ENCODE measurements at regions of chr12 and their contacts with region 1.

Region 1: GRCh38 chr12:22299294-22299912 is 35.1 kb downstream of the ST8SIA1 start:
- DNase-seq: no peak
- ATAC-seq: no peak
- H3K4me3 ChIP-seq: no peak overlapping the region
- H3K27ac ChIP-seq: no peak overlapping the region
- H3K4me1 ChIP-seq: no peaks in the 10 kb centered on the region
- H3K27me3 ChIP-seq: no peaks in the 10 kb centered on the region
- CTCF ChIP-seq: no peak

Region 2: DNA sequence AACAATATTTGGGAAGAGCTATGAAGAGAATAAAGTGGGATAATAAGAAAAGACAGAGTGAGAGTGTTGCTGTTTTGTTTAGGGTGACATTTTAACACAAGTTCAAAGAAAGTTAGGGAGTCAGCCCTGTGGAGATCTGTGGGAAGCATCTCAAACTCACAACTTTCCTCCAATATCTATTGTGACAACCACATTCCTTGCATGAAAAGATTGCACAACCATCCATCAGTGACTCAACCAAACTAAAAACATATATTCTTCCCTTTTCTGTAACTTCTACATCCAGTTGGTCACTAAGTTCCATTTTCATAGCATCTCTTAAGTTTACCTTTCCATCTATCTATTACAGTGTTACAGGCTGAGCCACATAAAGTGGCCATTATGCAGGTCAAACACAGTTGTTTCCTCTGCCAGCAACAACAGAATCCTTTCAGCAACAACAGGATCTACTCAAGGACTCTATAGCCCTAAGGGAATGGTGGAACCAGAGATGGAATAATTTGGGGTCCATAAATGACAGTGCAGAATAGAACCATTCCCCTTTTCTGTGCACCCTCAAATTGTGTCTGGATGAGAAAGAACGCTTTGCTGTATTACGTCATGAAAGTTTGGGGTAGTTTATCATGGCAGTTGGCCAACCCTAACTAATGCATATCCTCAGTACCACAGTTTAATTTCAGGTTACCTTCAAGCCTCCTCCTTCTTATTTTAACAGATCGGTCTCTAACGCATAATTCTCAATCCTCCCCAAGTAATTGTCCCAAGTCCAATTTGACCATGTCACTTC is 83.7 kb before region 1 on chr12:
- intact Hi-C with region 1: loop called in 1 of 10 experiments (anchors 2 kb)
- DNase-seq: no peak
- ATAC-seq: no peak
- H3K4me3 ChIP-seq: no peak overlapping the region
- H3K27ac ChIP-seq: no peak overlapping the region
- H3K4me1 ChIP-seq: no peaks in the 10 kb centered on the region
- H3K27me3 ChIP-seq: no peaks in the 10 kb centered on the region
- CTCF ChIP-seq: no peak

Measured in heart right ventricle (tissue), 16 donors.